ENCODE measurements at regions of chr6 and their contacts with region 1.

Region 1: DNA sequence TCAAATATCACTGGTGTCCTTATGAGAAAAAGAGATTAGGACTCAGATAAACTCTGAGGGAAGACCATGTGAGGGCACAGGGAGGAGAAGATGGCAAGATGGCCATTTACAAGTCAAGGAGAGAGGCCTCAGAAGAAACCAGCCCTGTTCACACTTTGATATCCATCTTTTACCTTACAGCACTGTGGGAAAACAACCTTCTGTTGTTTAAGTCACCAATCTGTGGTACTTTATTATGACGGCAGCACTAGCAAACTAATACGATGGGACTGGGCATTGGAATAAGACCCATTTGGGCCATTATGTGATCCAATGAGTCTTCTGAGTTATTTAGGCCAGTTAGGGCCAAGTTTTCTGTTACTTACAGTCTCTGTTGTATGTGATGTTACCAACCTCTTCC is 26.4 kb upstream of the CD2AP start:
- DNase-seq: no peak
- H3K4me3 Mint-ChIP-seq: no peak overlapping the region
- H3K27ac Mint-ChIP-seq: no peak overlapping the region
- H3K4me1 Mint-ChIP-seq: peaks cover 13% of the 10 kb centered on the region
- H3K27me3 Mint-ChIP-seq: no peaks in the 10 kb centered on the region

Region 2: DNA sequence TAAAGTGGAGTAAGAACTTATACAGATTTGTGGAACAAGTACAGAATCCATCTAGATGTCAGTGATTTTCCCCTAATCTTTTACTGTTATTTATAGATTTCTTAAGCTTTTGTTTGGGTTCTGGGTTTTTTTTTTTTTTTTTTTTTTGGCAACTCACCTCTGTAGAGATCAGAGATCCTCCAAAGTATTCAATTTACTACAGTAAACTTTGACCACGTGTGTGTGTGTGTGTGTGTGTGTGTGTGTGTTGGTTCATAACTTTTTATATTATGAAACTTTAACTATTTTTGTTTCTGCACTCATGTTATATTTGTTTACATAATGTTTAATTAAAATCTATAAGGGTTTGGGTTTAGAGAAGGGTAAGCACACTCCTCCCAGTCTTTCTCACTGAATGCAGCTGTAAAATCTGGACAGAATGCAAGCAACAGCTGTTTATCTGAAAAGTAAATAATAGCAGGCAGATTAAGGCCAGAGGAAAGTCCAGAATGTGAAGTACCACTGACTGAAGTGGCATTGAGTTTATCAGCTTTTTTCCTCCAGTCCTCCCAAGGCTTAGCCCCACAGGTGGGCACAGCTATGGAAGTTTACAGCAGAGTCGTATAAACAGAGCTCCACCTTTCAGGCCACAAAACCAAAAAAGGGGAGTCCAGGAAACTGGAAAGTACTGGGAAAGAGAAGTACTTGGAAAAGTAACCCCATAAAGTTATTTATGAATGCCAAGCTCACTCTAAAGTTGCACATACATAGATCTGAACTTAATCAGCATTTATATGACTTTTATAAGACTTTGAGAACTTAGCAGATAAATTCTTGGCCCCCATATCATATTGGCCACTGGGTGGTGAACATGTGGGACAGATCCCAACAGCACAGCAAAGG is 16.5 kb before region 1 on chr6:
- CTCF ChIA-PET with region 1: interaction called, 10 read pairs
- POLR2A ChIA-PET with region 1: no interaction called
- DNase-seq: no peak
- H3K4me3 Mint-ChIP-seq: no peak overlapping the region
- H3K27ac Mint-ChIP-seq: no peak overlapping the region
- H3K4me1 Mint-ChIP-seq: no peaks in the 10 kb centered on the region
- H3K27me3 Mint-ChIP-seq: peaks cover 4% of the 10 kb centered on the region